ENCODE measurements at regions of chr2 and their contacts with region 1.

Region 1: DNA sequence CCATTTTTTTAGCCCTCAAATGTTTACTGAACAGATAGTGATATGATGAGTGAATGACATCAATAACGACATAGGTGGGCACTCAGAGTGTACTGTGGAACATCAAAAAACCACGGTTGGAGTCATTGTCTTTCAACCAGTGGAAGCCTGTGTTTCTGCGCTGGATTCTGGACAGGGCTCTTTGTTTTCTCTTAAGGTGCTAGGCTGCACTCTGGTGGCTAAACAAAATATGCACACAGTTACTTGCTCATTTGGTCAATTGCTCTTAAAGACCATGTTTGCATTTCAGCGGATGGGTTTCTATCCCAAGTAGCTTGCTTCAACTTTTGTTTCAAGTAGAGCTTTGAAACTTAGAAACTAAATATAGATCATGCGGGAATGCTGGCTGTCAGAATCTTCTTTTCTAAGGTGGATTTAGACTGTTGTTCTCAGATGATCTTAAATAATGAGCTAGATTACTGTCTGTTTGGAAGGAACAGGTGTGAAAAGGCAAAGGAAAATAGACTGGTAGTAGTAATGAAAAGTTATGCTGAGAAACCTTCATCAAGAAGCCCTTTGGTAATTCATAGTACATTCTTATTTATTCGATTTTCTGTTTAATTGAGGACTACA is 48.5 kb upstream of the LYPD6B start:
- DNase-seq: peak in 2 of 4 donors; percentile 72 to 88
- ATAC-seq: peak; percentile 96
- H3K4me3 ChIP-seq: no peak overlapping the region
- H3K27ac ChIP-seq: no peak overlapping the region
- H3K4me1 ChIP-seq: no peaks in the 10 kb centered on the region
- H3K27me3 ChIP-seq: no peaks in the 10 kb centered on the region
- CTCF ChIP-seq: peak; percentile 46 to 50

Region 2: GRCh38 chr2:148644883-148645538 is 345.0 kb before region 1 on chr2:
- intact Hi-C with region 1: loop called in 1 of 2 experiments (anchors 10 kb)
- DNase-seq: peak; percentile 94 to 99 (median 98)
- ATAC-seq: peak; percentile 84
- H3K4me3 ChIP-seq: peak overlapping the region; percentile 95 to 98
- H3K27ac ChIP-seq: peak overlapping the region; percentile 99 to 100
- H3K4me1 ChIP-seq: peaks cover 10 to 60% of the 10 kb centered on the region in 2 donors
- H3K27me3 ChIP-seq: no peaks in the 10 kb centered on the region
- CTCF ChIP-seq: peak in 1 of 2 donors; percentile 10

Measured in left lung (tissue), 14 donors.